Activated CD8-positive, alpha-beta T cell treated with anti-CD3 and anti-CD28 coated beads, Interleukin-2, amount 10 ng/mL, durations not matched to agents 7 days and 5 days (primary cell): ENCODE measurements at regions of chr22 and their contacts with region 1.

Region 1: DNA sequence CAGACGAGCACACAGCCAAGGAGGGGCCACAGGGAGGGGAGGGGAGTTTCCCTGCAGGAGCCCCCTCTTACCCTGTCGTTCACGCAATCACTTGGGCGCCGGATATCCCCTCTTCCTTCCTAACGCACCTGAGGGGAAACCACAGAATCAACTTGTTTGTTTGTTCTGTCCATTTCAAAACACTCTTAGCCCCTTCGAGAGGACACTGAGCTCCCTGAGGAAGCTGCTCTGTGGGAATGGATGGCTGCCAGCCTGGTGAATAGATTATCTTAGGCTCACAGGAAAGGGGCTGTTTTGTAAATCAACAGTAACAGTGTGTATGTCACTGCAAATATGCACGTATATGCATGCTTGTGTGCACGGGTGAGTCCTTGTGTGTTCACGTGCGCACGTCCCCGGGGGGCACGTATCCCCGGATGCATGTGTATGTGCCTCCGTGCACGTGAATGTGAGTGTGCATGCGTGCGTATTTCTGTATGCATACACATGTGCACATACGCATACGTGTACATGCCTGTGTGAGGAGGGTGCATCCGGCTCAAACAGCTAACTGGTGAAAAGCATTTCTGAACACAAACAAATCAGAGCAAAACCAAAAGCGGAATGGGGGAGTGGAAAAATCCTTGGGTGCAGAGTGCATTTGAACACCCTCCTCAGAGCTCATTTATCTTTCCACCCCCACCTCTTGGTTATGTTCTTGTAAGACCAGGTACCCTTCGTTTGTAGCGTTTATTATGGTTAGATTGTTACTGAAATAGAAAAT is 7.2 kb downstream of the ARSA start:
- DNase-seq: peak; percentile 95
- ATAC-seq: peak; percentile 79
- H3K4me3 Mint-ChIP-seq: peak overlapping the region; percentile 84
- H3K27ac Mint-ChIP-seq: peak overlapping the region; percentile 100
- H3K4me1 Mint-ChIP-seq: peaks cover 42% of the 10 kb centered on the region
- H3K27me3 Mint-ChIP-seq: peaks cover 2% of the 10 kb centered on the region

Region 2: GRCh38 chr22:50469377-50470305 is 151.1 kb before region 1 on chr22:
- CTCF ChIA-PET with region 1: interaction called, 9 read pairs
- POLR2A ChIA-PET with region 1: interaction called, 10 read pairs
- DNase-seq: peak; percentile 99
- ATAC-seq: peak; percentile 75
- H3K4me3 Mint-ChIP-seq: peak overlapping the region; percentile 71
- H3K27ac Mint-ChIP-seq: peak overlapping the region; percentile 95
- H3K4me1 Mint-ChIP-seq: peaks cover 76% of the 10 kb centered on the region
- H3K27me3 Mint-ChIP-seq: no peaks in the 10 kb centered on the region

Region 3: GRCh38 chr22:50525390-50526068 is 95.2 kb before region 1 on chr22 and contains the start of gene SCO2:
- CTCF ChIA-PET with region 1: interaction called, 77 read pairs
- POLR2A ChIA-PET with region 1: interaction called, 111 read pairs
- DNase-seq: peak; percentile 98
- ATAC-seq: peak; percentile 62
- H3K4me3 Mint-ChIP-seq: peak within 1 kb of the TSS; percentile 97
- H3K27ac Mint-ChIP-seq: peak within 1 kb of the TSS; percentile 95
- H3K4me1 Mint-ChIP-seq: peaks cover 45% of the 10 kb centered on the region
- H3K27me3 Mint-ChIP-seq: no peaks in the 10 kb centered on the region
- total RNA-seq, gene SCO2: 11.7 to 13.9 TPM

Region 4: GRCh38 chr22:50544078-50544745 is 76.6 kb before region 1 on chr22:
- CTCF ChIA-PET with region 1: interaction called, 39 read pairs
- POLR2A ChIA-PET with region 1: interaction called, 73 read pairs
- DNase-seq: peak; percentile 91
- ATAC-seq: peak; percentile 60
- H3K4me3 Mint-ChIP-seq: peak overlapping the region; percentile 60
- H3K27ac Mint-ChIP-seq: peak overlapping the region; percentile 86
- H3K4me1 Mint-ChIP-seq: peaks cover 61% of the 10 kb centered on the region
- H3K27me3 Mint-ChIP-seq: no peaks in the 10 kb centered on the region

Region 5: GRCh38 chr22:50582562-50583293 is 38.0 kb before region 1 on chr22 and contains the start of gene CHKB:
- CTCF ChIA-PET with region 1: interaction called, 11 read pairs
- POLR2A ChIA-PET with region 1: interaction called, 14 read pairs
- DNase-seq: peak; percentile 99
- ATAC-seq: peak; percentile 96
- H3K4me3 Mint-ChIP-seq: peak within 1 kb of the TSS; percentile 98
- H3K27ac Mint-ChIP-seq: peak within 1 kb of the TSS; percentile 94
- H3K4me1 Mint-ChIP-seq: peaks cover 42% of the 10 kb centered on the region
- H3K27me3 Mint-ChIP-seq: no peaks in the 10 kb centered on the region
- total RNA-seq, gene CHKB: 98.9 to 101 TPM

Region 6: DNA sequence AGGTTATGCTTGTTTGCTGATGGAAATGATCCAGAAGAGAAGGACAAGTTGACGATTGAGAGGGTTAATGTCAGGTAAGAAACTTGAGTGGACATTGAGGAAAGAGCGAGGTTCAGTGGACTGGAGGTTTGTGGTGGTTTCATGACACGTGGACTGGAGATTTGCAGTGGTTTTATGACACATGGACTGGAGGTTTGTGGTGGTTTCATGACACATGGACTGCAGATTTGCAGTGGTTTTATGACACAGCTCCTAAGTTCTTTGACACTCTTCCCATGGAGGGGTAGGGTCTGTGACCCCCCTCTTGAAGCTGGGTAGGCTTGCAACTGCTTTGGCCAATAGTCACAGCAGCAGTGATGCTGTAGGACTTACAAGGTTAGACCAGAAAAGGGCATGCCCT is 25.6 kb before region 1 on chr22:
- CTCF ChIA-PET with region 1: no interaction called
- POLR2A ChIA-PET with region 1: no interaction called
- DNase-seq: no peak
- ATAC-seq: no peak
- H3K4me3 Mint-ChIP-seq: no peak overlapping the region
- H3K27ac Mint-ChIP-seq: no peak overlapping the region
- H3K4me1 Mint-ChIP-seq: peaks cover 4% of the 10 kb centered on the region
- H3K27me3 Mint-ChIP-seq: peaks cover 11% of the 10 kb centered on the region

Region 7: DNA sequence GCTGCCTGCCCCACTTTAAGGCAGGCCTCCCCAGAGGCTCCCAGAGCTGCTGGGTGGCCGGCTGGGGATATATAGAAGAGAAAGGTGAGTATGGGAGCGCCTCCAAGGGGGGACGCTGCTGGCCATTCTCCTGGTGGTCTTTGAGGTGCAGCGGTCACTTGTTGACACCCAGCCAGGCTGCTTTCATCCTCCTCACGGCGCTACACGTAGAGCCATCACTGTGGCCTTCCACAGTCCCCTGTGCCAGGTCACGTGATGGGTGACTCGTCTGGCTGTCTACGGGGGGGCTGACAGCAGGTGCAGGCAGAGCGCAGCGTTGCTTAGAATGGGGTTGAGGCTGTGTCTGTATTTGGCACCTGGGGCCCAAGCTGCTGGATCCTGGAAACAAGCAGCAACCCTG is 119.1 kb after region 1 on chr22:
- CTCF ChIA-PET with region 1: no interaction called
- POLR2A ChIA-PET with region 1: no interaction called
- DNase-seq: peak; percentile 14
- ATAC-seq: no peak
- H3K4me3 Mint-ChIP-seq: no peak overlapping the region
- H3K27ac Mint-ChIP-seq: no peak overlapping the region
- H3K4me1 Mint-ChIP-seq: no peaks in the 10 kb centered on the region
- H3K27me3 Mint-ChIP-seq: no peaks in the 10 kb centered on the region